ENCODE measurements at regions of chr3 and their contacts with region 1.

Region 1: DNA sequence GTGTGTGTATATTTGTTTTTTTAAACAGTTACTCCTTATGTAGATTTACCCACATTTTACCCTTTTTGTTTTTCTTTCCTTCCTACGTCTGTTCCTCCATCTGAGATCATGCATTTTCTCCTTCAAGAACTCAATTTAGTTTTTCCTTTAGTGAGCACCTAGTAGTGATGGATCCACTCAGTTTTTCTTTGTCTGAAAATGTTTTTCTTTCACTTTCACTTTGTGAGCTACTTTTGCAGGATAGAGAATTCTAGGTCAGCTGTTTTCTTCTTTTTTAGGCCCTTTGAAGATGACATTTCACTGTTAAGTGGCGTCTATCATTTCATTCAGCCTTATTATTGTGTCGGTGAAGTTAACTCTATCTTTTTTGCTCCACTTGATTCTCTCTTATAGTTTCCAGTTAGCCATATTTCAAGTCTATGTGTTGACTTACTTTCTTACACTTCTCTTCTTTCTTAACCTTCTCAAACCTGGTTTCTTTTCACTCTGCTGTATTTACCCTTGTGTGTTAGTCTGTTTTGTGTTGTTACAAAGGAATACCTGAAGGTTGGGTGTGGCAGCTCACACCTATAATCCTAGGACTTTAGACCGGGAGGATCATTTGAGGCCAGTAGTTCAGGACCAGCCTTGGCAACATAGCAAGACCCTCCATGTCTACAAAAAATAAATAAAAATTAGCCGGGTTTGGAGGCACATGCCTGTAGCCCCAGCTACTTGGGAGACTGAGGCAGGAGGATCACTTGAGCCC is 55.8 kb downstream of the PRKCI start:
- DNase-seq: no peak
- H3K4me3 Mint-ChIP-seq: peak overlapping the region; percentile 81
- H3K27ac Mint-ChIP-seq: peak overlapping the region; percentile 82
- H3K4me1 Mint-ChIP-seq: peaks cover 19% of the 10 kb centered on the region
- H3K27me3 Mint-ChIP-seq: no peaks in the 10 kb centered on the region

Region 2: GRCh38 chr3:170207717-170208116 is 70.3 kb before region 1 on chr3:
- intact Hi-C with region 1: no loop called
- DNase-seq: no peak
- H3K4me3 Mint-ChIP-seq: no peak overlapping the region
- H3K27ac Mint-ChIP-seq: no peak overlapping the region
- H3K4me1 Mint-ChIP-seq: peaks cover 3% of the 10 kb centered on the region
- H3K27me3 Mint-ChIP-seq: peaks cover 12% of the 10 kb centered on the region

Region 3: GRCh38 chr3:170221924-170222646 is 55.9 kb before region 1 on chr3 and contains the start of gene PRKCI:
- intact Hi-C with region 1: loop called (anchors 2 kb)
- DNase-seq: peak; percentile 96
- H3K4me3 Mint-ChIP-seq: peak within 1 kb of the TSS; percentile 89
- H3K27ac Mint-ChIP-seq: peak within 1 kb of the TSS; percentile 94
- H3K4me1 Mint-ChIP-seq: peaks cover 23% of the 10 kb centered on the region
- H3K27me3 Mint-ChIP-seq: peaks cover 4% of the 10 kb centered on the region
- total RNA-seq, gene PRKCI: 19.7 and 32.3 TPM in 2 replicates

Region 4: GRCh38 chr3:170301405-170301804 is 23.4 kb after region 1 on chr3:
- intact Hi-C with region 1: no loop called
- DNase-seq: no peak
- H3K4me3 Mint-ChIP-seq: no peak overlapping the region
- H3K27ac Mint-ChIP-seq: no peak overlapping the region
- H3K4me1 Mint-ChIP-seq: no peaks in the 10 kb centered on the region
- H3K27me3 Mint-ChIP-seq: no peaks in the 10 kb centered on the region